ENCODE measurements at regions of chr19 and their contacts with region 1.

Region 1: DNA sequence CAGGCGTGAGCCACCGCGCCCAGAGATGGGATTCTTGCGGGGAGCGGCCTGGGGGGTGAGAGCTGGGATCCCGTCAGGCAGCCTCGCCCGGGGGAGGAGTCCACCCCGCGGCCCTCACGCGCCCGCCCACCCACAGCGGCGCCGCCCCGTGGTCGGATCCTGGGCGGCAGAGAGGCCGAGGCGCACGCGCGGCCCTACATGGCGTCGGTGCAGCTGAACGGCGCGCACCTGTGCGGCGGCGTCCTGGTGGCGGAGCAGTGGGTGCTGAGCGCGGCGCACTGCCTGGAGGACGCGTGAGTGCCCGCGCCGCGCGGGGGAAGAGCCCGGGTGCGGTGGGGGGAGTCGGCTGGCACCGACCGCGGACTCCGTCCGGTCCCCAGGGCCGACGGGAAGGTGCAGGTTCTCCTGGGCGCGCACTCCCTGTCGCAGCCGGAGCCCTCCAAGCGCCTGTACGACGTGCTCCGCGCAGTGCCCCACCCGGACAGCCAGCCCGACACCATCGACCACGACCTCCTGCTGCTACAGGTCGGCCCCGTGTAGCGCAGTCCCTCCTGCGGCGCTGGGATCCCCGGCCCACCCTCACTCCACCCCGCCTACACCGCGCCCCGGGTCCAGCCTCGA is 1.1 kb downstream of the CFD start:
- DNase-seq: no peak
- H3K4me3 ChIP-seq: peak overlapping the region in 48 of 59 donors; percentile 7 to 53 (median 32)
- H3K27ac ChIP-seq: no peak overlapping the region
- H3K27me3 ChIP-seq: peaks cover 0 to 41% (median 22%) of the 10 kb centered on the region in 45 donors
- CTCF ChIP-seq: peak in 3 of 56 donors; percentile 9 to 18 (median 16)

Region 2: DNA sequence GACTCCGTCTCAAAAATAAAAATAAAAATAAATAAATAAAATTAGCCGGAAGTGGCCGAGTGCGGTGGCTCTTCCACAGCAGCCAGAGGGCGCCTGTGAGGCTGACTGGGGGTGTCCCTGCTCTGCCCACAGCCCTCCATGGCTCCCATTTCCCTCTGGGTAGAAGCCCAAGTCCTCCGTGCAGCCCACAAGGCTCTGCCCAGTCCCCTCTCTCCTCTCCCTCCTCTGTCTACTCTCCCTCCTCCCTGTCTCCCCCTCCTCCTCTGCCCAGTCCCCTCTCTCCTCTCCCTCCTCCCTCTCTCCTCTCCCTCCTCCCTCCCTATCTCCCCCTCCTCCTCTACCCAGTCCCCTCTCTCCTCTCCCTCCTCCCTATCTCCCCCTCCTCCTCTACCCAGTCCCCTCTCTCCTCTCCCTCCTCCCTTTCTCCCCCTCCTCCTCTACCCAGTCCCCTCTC is 89.2 kb before region 1 on chr19:
- intact Hi-C with region 1: no loop called
- DNase-seq: no peak
- H3K4me3 ChIP-seq: no peak overlapping the region
- H3K27ac ChIP-seq: no peak overlapping the region
- H3K27me3 ChIP-seq: no peaks in the 10 kb centered on the region
- CTCF ChIP-seq: peak in 42 of 56 donors; percentile 11 to 47 (median 30)

Region 3: GRCh38 chr19:920051-920864 is 59.7 kb after region 1 on chr19:
- intact Hi-C with region 1: loop called (anchors 1 to 2 kb)
- DNase-seq: no peak
- H3K4me3 ChIP-seq: peak overlapping the region in 33 of 59 donors; percentile 7 to 50 (median 20)
- H3K27ac ChIP-seq: no peak overlapping the region
- H3K27me3 ChIP-seq: peaks cover 0 to 49% (median 40%) of the 10 kb centered on the region in 45 donors
- CTCF ChIP-seq: no peak

Region 4: DNA sequence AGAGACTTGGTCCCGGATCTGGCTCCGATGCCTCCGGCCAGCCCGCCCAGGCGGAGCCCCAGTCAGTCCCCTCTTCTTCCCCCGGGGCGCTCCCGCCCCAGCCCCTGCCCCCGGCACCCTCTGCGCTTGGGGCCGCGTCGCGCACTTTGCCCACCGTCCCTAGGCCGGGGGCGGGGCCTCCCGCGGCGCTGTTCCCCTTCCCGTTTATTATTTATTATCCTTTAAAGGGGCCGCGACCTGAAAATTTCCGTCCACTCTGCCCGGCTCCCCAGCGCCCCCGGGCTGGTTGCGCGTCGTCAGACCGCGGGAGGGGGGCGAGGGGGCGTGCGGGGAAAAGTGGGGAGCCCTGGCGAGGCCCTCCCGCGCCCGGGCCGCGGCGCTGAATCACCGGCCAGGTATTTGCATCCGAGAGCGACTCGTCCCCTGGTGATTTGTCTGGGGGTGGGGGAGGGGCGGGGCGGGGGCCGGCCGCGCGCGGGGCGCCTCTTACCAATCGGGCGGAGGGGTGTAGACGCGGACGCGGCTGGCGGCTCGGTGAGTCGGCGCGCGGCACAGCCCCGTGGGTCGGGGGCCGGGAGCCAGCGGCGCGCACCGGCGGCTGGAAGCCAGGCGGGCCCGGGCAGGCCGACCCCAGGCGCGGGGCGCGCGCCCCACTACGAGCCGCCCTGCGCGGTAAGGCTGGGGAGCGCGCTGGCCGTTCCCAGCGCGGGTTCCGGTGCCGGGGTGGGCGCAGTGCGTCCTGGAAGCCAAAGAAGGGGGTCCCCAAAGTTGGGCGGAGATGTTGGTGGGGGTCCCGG is 65.1 kb after region 1 on chr19 and contains the start of gene ARID3A:
- intact Hi-C with region 1: loop called (anchors 1 to 2 kb)
- DNase-seq: peak; percentile 69 to 86 (median 76)
- H3K4me3 ChIP-seq: peak within 1 kb of the TSS; percentile 65 to 95 (median 82)
- H3K27ac ChIP-seq: peak within 1 kb of the TSS in 57 of 59 donors; percentile 29 to 88 (median 77)
- H3K27me3 ChIP-seq: peaks cover 0 to 8% (median 6%) of the 10 kb centered on the region in 45 donors
- CTCF ChIP-seq: peak in 23 of 56 donors; percentile 4 to 51 (median 15)
- total RNA-seq, gene ARID3A: 3.8 to 17.6 (median 8.7) TPM

Region 5: GRCh38 chr19:989381-990119 is 129.0 kb after region 1 on chr19:
- intact Hi-C with region 1: loop called in 1 of 2 experiments (anchors 5 kb)
- DNase-seq: no peak
- H3K4me3 ChIP-seq: no peak overlapping the region
- H3K27ac ChIP-seq: no peak overlapping the region
- H3K27me3 ChIP-seq: peaks cover 0 to 2% (median 0%) of the 10 kb centered on the region in 45 donors
- CTCF ChIP-seq: no peak